HEK293 (cell line): ENCODE measurements at regions of chr1 and their contacts with region 1.

Region 1: GRCh38 chr1:52056163-52056936 is at the start of gene BTF3L4:
- H3K4me3 ChIP-seq: peak within 1 kb of the TSS; percentile 91
- H3K27ac ChIP-seq: peak within 1 kb of the TSS; percentile 84
- H3K4me1 ChIP-seq: peaks cover 11% of the 10 kb centered on the region; the same call in 1 of the 2 replicates
- CTCF ChIP-seq: peak; percentile 47

Region 2: GRCh38 chr1:51897699-51898031 is 158.7 kb before region 1 on chr1:
- CTCF ChIA-PET with region 1: interaction called, 3 read pairs
- POLR2A ChIA-PET with region 1: interaction called, 12 read pairs
- H3K4me3 ChIP-seq: no peak overlapping the region
- H3K27ac ChIP-seq: no peak overlapping the region
- H3K4me1 ChIP-seq: no peaks in the 10 kb centered on the region
- CTCF ChIP-seq: no peak

Region 3: DNA sequence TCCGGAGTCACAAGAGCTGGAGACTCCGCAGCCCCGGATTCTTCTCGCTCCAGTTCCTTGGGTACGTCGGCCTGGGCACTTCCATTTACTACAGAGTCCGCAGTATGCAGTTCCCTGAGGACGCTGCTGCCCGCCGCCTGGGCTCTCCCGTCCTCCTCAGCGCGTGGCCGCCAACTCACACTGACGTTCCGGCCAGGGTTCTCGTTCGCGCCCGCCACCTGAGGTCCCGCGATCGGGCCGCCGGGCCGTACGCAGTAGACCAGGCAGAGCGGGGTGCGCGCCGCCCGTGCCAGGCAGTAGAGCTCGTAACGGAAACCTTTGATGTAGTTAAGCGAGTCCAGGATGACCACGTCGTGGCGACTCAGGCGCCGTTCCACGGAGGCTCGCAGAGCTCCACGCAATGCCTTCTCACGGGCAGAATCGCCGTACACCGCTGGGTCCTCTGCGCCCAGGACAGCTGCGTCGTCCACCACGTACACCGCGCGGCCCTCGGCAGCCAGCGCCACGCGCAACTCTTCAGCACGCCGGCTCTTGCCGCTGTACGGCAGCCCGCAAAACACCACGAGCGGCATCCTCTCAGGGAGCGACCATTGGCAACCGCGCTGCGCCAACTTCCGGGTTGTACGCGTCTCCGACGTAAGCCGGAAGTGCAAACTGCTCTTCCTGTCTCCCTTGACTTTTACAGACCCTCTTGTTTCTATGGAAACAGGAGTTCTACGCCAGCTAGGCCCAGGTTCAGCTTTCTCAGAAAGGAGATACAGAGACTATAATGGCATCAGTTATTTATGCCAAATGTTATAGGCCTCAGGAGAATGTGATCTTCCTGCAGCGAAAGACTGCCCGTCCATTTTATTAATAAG is 22.9 kb before region 1 on chr1 and contains the start of gene KTI12:
- CTCF ChIA-PET with region 1: no interaction called
- POLR2A ChIA-PET with region 1: interaction called, 30 read pairs
- H3K4me3 ChIP-seq: peak within 1 kb of the TSS; percentile 88
- H3K27ac ChIP-seq: peak within 1 kb of the TSS; percentile 58; the same call in 1 of the 2 replicates
- H3K4me1 ChIP-seq: no peaks in the 10 kb centered on the region
- CTCF ChIP-seq: peak; percentile 50

Region 4: GRCh38 chr1:52203935-52204625 is 147.7 kb after region 1 on chr1:
- CTCF ChIA-PET with region 1: no interaction called
- POLR2A ChIA-PET with region 1: no interaction called
- H3K4me3 ChIP-seq: no peak overlapping the region
- H3K27ac ChIP-seq: no peak overlapping the region
- H3K4me1 ChIP-seq: peaks cover 5% of the 10 kb centered on the region; the same call in 1 of the 2 replicates
- CTCF ChIP-seq: no peak

Region 5: DNA sequence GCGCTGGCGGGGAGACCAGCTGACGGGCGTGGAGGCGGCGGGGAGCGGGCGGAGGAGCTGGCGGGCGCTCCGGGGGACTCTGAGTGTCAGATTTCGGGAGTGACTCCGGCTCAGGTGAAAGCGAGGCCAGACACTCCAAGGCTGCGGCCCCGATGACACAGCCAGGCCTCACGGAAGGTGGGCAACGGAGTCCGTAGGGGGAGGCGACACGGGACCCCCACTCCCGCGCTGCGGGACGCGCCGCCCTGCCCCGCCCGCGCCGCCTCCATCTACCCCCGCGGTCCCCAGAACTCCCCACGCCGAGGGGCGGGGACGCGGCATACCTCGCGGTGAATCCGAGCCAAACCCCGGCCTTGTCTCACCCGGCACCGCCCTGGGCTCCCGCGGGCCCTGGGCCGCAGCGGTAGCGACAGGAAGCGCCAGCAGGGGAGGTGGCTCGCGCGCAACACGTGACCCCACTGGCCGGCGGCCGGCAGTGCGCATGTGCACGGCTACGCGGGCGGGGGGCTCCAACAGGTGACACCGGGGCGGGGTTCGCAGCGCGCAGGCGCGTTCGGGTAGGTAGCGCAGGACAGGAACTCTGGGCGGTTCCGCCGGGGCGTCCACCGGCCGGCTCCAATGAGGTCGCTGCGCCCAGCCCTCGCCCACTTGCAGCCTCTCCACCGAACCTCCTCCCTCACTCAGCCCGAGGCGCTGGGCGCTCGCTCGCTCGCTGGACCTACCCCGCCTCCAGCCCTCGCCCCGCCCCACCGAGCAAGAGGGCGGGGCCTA is 309.6 kb after region 1 on chr1 and contains the start of gene CC2D1B:
- CTCF ChIA-PET with region 1: no interaction called
- POLR2A ChIA-PET with region 1: interaction called, 10 read pairs
- H3K4me3 ChIP-seq: peak within 1 kb of the TSS; percentile 91
- H3K27ac ChIP-seq: peak within 1 kb of the TSS; percentile 91
- H3K4me1 ChIP-seq: peaks cover 7% of the 10 kb centered on the region; the same call in 1 of the 2 replicates
- CTCF ChIP-seq: peak; percentile 74

Region 6: DNA sequence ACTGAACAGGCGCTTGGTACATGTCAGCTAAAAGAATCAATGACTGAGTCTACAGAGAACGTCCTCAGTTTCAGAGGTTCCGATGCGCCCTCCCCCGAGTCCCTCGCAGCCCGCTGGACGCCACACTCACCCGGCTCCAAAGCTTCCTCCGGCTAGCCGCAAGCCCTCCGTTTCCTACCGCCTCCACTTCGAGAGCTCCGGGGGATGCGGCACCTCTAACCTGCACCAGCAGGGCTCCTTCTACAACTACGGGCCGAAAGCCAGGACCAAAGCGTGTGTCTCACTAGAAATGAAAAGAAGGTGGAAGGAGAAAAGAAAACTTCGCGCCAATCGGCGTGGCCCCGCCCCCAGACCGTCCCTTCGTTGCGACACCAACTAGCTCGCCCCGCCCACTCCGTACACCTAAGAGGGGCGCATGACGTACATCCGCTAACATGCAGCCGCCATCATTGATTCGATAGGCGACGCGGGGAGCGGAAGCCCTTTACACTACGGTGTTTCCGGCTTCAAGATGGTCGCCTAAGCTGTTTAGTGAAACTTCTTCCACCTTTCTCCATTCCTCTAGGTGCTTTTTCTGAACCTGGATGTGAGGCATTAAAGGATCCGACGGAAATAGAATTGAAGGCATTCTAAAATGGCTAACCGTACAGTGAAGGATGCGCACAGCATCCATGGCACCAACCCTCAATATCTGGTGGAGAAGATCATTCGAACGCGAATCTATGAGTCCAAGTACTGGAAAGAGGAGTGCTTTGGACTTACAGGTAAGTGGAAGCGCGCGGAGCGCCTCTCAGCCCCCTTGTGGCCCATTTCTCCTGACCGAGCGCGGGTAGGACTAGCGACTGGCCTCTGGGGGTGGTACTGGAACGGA is 348.0 kb after region 1 on chr1 and contains the starts of genes ORC1 and PRPF38A:
- CTCF ChIA-PET with region 1: no interaction called
- POLR2A ChIA-PET with region 1: interaction called, 11 read pairs
- H3K4me3 ChIP-seq: peak within 1 kb of the TSS; percentile 83
- H3K27ac ChIP-seq: peak within 1 kb of the TSS; percentile 68
- H3K4me1 ChIP-seq: no peaks in the 10 kb centered on the region
- CTCF ChIP-seq: peak; percentile 94